Activated CD4-positive, alpha-beta memory T cell treated with anti-CD3 and anti-CD28 coated beads, Interleukin-2, amount 10 ng/mL, durations not matched to agents 7 days and 5 days (primary cell): ENCODE measurements at regions of chr16 and their contacts with region 1.

Region 1: GRCh38 chr16:2883027-2883851 is at the start of gene FLYWCH2:
- DNase-seq: peak; percentile 100
- H3K4me3 Mint-ChIP-seq: peak within 1 kb of the TSS; percentile 84
- H3K27ac Mint-ChIP-seq: peak within 1 kb of the TSS; percentile 89
- H3K4me1 Mint-ChIP-seq: peaks cover 19% of the 10 kb centered on the region
- H3K27me3 Mint-ChIP-seq: no peaks in the 10 kb centered on the region
- total RNA-seq, gene FLYWCH2: 19.4 to 20.5 TPM

Region 2: DNA sequence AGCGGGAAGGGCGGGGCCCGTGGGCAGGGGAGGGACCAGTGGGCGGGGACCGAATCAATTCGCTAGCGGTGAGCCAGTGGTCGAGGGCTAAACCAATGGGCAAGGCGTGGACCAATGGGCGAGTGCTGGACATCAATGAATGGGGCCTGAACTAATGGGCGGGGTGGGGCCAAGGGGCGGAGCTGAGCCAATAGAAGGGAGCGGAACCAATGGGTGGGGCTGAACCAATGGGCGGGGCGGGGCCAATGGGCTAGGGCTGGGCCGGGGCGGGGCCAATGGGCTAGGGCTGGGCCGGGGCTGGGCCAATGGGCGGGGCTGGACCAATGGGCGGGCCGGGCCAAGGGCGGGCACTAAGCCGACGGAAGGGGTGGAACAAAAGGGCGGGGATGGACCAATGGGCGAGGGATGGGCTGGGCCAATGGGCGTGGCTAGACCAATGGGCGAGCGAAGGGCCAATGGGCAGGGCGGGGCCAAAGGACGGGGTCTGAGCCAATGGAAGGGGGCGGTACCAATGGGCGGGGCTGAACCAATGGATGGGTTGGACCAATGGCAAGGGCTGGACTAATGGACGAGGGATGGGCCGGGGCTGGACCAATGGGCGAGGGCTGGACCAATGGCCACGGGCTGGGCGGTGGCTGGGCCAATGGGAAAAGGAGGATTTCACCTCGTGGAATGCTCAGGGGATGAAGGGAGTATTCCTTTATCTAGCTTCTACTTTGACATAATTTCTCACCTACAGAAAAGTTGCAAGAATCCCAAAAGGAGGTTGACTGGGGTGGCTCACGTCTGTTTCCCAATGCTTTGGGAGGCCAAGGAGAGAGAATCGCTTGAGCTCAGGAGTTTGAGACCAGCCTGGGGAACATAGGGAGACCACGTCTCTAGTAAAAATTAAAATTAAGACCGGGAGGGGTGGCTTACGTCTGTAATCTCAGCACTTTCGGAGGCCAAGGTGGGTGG is 22.5 kb after region 1 on chr16:
- CTCF ChIA-PET with region 1: interaction called, 22 read pairs
- POLR2A ChIA-PET with region 1: interaction called, 28 read pairs
- DNase-seq: peak; percentile 98
- H3K4me3 Mint-ChIP-seq: peak overlapping the region; percentile 87
- H3K27ac Mint-ChIP-seq: peak overlapping the region; percentile 91
- H3K4me1 Mint-ChIP-seq: peaks cover 28% of the 10 kb centered on the region
- H3K27me3 Mint-ChIP-seq: peaks cover 6% of the 10 kb centered on the region

Region 3: GRCh38 chr16:2911580-2912329 is 28.5 kb after region 1 on chr16 and contains the start of gene FLYWCH1:
- CTCF ChIA-PET with region 1: interaction called, 22 read pairs
- POLR2A ChIA-PET with region 1: interaction called, 28 read pairs
- DNase-seq: peak; percentile 99
- H3K4me3 Mint-ChIP-seq: peak within 1 kb of the TSS; percentile 96
- H3K27ac Mint-ChIP-seq: peak within 1 kb of the TSS; percentile 88
- H3K4me1 Mint-ChIP-seq: peaks cover 52% of the 10 kb centered on the region
- H3K27me3 Mint-ChIP-seq: peaks cover 6% of the 10 kb centered on the region
- total RNA-seq, gene FLYWCH1: 75.2 to 80.8 TPM

Region 4: DNA sequence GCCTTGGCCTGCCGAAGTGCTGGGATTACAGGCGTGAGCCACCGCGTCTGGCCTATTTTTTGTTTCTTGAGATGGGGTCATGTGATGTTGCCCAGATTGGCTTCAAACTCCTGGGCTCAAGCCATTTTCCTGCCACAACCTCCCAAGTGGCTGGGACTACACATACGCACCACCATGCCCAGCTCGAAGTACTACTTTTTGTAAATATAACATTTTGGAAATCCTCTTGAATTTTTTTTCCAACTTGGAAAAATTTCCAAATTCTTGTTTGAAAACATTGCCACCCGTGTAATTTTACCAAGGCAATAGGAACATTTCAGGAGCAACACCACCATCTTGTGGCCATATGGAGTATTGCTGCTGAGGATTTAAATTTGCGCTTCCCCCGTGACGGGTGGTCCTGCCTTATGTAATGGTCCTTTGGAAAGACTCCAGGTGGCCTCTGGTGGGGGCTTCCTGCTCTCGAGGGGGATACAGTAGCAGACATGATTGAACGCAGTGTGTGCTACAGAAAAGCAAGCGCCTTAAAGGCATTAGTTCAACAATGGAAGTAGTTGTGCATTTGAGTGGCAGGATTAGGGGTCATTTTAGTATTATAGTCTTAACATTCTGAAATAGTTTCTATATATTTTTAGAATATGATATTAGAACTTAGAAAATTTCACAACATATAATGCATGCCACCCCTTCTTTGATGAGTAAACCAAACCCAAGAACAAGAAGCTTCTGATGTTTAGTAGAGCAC is 36.4 kb after region 1 on chr16:
- CTCF ChIA-PET with region 1: interaction called, 14 read pairs
- POLR2A ChIA-PET with region 1: interaction called, 3 read pairs
- DNase-seq: peak; percentile 63
- H3K4me3 Mint-ChIP-seq: no peak overlapping the region
- H3K27ac Mint-ChIP-seq: peak overlapping the region; percentile 9
- H3K4me1 Mint-ChIP-seq: peaks cover 22% of the 10 kb centered on the region
- H3K27me3 Mint-ChIP-seq: no peaks in the 10 kb centered on the region

Region 5: DNA sequence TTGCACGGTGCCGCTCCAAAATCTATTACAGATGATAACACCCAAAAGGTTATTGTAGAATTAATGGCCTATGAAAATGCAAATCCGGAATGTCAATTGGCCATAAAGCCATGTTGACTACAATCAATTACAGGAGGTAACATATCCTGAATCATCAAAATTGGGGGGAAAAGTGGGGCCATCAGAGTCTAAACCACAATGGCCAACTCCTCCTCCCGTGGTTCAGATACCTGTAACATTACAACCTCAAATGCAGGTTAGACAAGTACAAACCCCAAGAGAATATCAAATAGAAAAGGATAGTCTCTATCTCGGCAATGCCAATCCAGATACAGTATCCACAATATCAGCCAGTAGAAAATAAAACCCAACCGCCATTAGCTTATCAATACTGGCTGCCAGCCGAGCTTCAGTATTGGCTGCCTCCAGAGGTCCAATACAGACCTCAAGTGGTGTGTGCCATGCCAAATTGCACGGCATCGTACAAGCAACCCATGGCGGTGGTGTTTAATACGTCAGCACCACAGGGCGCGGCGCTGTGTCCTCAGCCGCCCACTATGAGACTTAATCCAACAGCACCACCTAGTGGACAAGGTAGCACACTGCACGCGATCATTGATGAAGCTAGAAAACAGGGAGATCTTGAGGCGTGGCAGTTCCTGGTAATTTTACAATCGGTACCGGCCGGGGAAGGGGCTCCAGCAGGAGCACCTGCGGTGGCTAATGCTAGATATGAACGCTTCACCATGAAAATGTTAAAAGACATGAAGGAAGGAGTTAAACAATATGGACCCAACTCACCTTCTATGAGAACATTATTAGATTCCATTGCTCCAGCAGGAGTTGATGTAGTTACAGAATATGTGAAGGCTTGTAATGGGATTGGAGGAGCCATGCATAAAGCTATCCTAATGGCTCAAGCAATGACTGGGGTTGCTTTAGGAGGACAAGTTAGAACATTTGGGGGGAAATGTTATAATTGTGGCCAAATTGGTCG is 43.7 kb after region 1 on chr16:
- CTCF ChIA-PET with region 1: interaction called, 22 read pairs
- POLR2A ChIA-PET with region 1: interaction called, 6 read pairs
- DNase-seq: peak; percentile 90
- H3K4me3 Mint-ChIP-seq: no peak overlapping the region
- H3K27ac Mint-ChIP-seq: no peak overlapping the region
- H3K4me1 Mint-ChIP-seq: peaks cover 17% of the 10 kb centered on the region
- H3K27me3 Mint-ChIP-seq: no peaks in the 10 kb centered on the region